MCF 10A (cell line): ENCODE measurements at regions of chr10 and their contacts with region 1.

Region 1: GRCh38 chr10:133329491-133330202 is 7.0 kb downstream of the CALY start:
- DNase-seq: peak; percentile 84
- H3K4me3 Mint-ChIP-seq: peak overlapping the region; percentile 59
- H3K27ac Mint-ChIP-seq: no peak overlapping the region
- H3K4me1 Mint-ChIP-seq: peaks cover 5% of the 10 kb centered on the region
- H3K27me3 Mint-ChIP-seq: peaks cover 66% of the 10 kb centered on the region
- CTCF ChIP-seq: peak; percentile 89

Region 2: DNA sequence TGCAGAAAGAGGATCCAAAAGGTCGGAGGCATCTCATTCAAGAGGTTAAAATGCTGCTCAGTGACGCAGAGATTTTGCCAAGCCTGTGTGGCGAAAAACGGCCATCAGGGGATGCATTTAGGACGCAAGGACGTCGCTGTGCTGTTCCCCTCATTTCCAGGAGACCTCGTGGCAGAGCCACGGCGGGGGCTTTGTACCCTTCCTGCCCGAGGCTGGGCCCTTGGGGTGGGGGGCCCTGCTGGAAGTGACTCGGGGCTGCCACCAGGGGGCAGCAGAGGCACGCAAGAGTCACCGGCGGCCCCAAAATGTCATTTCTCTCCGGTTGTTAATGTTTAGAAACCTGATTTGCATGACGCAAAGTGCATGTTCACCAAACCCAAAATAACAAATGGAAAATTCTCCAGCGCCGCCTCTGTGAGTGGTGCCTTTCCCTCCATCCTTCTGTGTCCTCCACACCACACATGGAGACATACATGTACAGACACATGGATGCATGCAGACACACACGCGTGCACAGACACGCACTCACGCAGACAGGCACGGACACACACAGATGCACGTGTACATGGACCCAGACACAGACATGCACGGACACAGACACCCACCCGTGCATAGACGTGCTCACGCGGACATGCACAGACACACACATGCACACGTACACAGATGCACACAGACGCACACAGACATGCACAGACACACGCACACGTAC is 492.7 kb before region 1 on chr10:
- CTCF ChIA-PET with region 1: interaction called, 4 read pairs
- POLR2A ChIA-PET with region 1: no interaction called
- intact Hi-C with region 1: loop called (anchors 10 kb)
- DNase-seq: peak; percentile 10
- H3K4me3 Mint-ChIP-seq: no peak overlapping the region
- H3K27ac Mint-ChIP-seq: no peak overlapping the region
- H3K4me1 Mint-ChIP-seq: no peaks in the 10 kb centered on the region
- H3K27me3 Mint-ChIP-seq: peaks cover 35% of the 10 kb centered on the region
- CTCF ChIP-seq: peak; percentile 95

Region 3: GRCh38 chr10:133158756-133159610 is 170.7 kb before region 1 on chr10:
- CTCF ChIA-PET with region 1: no interaction called
- POLR2A ChIA-PET with region 1: no interaction called
- intact Hi-C with region 1: no loop called
- DNase-seq: no peak
- H3K4me3 Mint-ChIP-seq: no peak overlapping the region
- H3K27ac Mint-ChIP-seq: no peak overlapping the region
- H3K4me1 Mint-ChIP-seq: no peaks in the 10 kb centered on the region
- H3K27me3 Mint-ChIP-seq: no peaks in the 10 kb centered on the region
- CTCF ChIP-seq: no peak

Region 4: GRCh38 chr10:133343558-133343957 is 13.9 kb after region 1 on chr10:
- CTCF ChIA-PET with region 1: interaction called, 11 read pairs
- POLR2A ChIA-PET with region 1: no interaction called
- intact Hi-C with region 1: no loop called
- DNase-seq: no peak
- H3K4me3 Mint-ChIP-seq: no peak overlapping the region
- H3K27ac Mint-ChIP-seq: no peak overlapping the region
- H3K4me1 Mint-ChIP-seq: no peaks in the 10 kb centered on the region
- H3K27me3 Mint-ChIP-seq: no peaks in the 10 kb centered on the region
- CTCF ChIP-seq: no peak

Region 5: DNA sequence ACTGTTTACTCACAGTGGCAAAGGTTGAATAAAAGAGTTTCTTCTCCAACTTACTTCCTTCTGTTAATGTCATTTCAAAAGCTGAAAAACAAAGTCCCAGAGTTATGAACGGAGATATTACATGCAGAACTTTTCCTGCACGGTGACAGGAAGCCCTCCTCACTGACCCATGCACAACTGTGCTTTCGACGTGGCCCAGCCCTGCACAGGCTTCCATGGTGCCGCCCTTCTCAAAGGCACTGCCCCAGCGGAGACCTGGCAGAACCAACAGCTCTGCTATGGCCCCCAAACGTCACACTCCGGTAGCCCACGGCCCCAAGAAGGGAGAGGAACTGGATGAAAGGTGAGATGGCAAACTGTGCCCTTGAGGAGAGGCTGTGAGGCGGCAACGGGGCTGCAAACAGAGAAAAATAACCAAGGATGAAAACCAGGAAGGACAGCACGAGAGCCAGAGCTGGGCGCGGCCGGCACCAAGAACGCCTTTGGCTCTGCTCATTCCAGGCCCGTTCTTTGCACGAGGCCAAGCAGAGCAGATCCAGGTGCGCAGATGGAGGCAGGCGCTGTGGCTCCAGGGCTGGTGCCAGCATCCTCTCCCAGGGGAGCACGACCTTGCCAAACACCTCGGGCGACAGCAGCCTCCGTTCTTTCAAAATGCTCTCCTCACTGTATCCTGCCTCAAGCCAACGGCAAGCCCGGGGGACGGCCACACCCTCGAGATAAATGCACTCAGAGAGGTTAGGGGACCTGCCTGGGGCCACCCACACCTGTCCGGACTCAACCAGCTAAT is 35.2 kb after region 1 on chr10:
- CTCF ChIA-PET with region 1: interaction called, 18 read pairs
- POLR2A ChIA-PET with region 1: no interaction called
- intact Hi-C with region 1: no loop called
- DNase-seq: no peak
- H3K4me3 Mint-ChIP-seq: no peak overlapping the region
- H3K27ac Mint-ChIP-seq: no peak overlapping the region
- H3K4me1 Mint-ChIP-seq: no peaks in the 10 kb centered on the region
- H3K27me3 Mint-ChIP-seq: no peaks in the 10 kb centered on the region
- CTCF ChIP-seq: no peak

Region 6: DNA sequence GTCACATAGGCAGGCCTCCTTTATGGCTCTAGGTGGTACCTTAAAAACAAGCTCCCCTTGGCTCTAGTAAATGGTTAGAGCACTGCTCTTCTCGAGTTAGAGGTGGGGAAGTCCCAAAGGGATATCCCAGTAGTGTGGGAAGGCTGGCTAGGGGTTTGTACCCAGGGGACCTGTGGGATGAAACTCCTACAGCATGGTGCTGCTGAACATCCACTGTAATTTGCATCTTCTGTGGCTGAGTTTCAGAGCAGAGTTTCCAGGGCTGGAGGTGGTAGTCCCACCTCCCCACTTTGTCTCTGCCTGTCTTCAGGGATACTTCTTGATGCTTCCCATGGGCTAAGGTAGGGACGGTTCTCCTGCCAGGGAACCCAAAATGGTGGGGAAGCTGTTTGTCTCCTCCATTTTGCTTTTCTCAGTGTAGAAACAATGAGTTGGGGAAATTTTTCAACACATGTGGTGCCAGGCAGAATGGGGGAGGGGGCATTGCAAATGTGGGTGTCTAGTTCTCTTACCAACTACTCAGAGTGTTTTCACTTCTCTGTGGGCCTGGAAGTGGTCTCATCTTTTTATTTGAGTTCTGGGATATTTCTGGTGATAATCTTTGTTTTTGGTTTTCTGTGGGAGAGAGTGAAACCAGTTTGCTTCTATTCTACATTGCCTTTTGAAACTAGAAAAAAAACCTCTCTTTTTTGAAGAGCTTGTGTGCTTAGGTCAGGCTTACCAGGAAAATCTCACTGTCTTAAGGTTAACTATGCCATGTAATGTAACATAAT is 160.4 kb after region 1 on chr10:
- CTCF ChIA-PET with region 1: interaction called, 4 read pairs
- POLR2A ChIA-PET with region 1: no interaction called
- intact Hi-C with region 1: loop called (anchors 5 kb)
- DNase-seq: no peak
- H3K4me3 Mint-ChIP-seq: no peak overlapping the region
- H3K27ac Mint-ChIP-seq: no peak overlapping the region
- H3K4me1 Mint-ChIP-seq: no peaks in the 10 kb centered on the region
- H3K27me3 Mint-ChIP-seq: no peaks in the 10 kb centered on the region
- CTCF ChIP-seq: no peak